ENCODE measurements at regions of chr2 and their contacts with region 1.

Region 1: GRCh38 chr2:222701721-222702131 is 30.3 kb downstream of the MOGAT1 start:
- DNase-seq: no peak
- H3K4me3 Mint-ChIP-seq: no peak overlapping the region
- H3K27ac Mint-ChIP-seq: peak overlapping the region; percentile 9
- H3K4me1 Mint-ChIP-seq: peaks cover 34% of the 10 kb centered on the region
- H3K27me3 Mint-ChIP-seq: no peaks in the 10 kb centered on the region
- CTCF ChIP-seq: no peak

Region 2: GRCh38 chr2:222623756-222624309 is 77.9 kb before region 1 on chr2:
- CTCF ChIA-PET with region 1: no interaction called
- intact Hi-C with region 1: no loop called
- DNase-seq: no peak
- H3K4me3 Mint-ChIP-seq: no peak overlapping the region
- H3K27ac Mint-ChIP-seq: no peak overlapping the region
- H3K4me1 Mint-ChIP-seq: no peaks in the 10 kb centered on the region
- H3K27me3 Mint-ChIP-seq: no peaks in the 10 kb centered on the region
- CTCF ChIP-seq: no peak

Region 3: DNA sequence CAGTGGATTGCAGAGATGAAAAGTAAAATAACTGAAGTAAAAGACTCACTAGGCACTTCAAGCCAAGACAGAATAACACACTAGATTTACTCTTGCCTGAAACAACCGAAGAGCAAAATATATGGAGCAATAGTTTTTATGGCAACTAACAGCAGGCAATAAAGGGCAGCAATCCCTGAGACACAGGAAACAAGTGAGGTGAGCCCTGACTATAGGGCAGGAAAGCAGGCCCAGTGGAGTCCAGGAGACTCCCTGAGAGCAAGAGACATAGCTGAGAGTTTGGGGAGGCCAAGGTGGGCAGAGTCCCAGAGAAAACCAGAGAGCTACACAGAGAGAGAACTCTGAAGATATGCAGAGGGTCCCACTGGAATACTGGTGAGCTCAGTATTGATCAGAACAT is 64.7 kb before region 1 on chr2:
- CTCF ChIA-PET with region 1: no interaction called
- intact Hi-C with region 1: no loop called
- DNase-seq: no peak
- H3K4me3 Mint-ChIP-seq: no peak overlapping the region
- H3K27ac Mint-ChIP-seq: peak overlapping the region; percentile 53
- H3K4me1 Mint-ChIP-seq: peaks cover 28% of the 10 kb centered on the region
- H3K27me3 Mint-ChIP-seq: no peaks in the 10 kb centered on the region
- CTCF ChIP-seq: no peak

Region 4: GRCh38 chr2:222730366-222730999 is 28.8 kb after region 1 on chr2:
- CTCF ChIA-PET with region 1: interaction called, 10 read pairs
- intact Hi-C with region 1: no loop called
- DNase-seq: no peak
- H3K4me3 Mint-ChIP-seq: no peak overlapping the region
- H3K27ac Mint-ChIP-seq: no peak overlapping the region
- H3K4me1 Mint-ChIP-seq: peaks cover 23% of the 10 kb centered on the region
- H3K27me3 Mint-ChIP-seq: no peaks in the 10 kb centered on the region
- CTCF ChIP-seq: no peak